Motor neuron (in vitro differentiated cells): ENCODE measurements at regions of chr5 and their contacts with region 1.

Region 1: GRCh38 chr5:170782438-170782837 is 1.1 kb upstream of the GABRP start:
- ATAC-seq: peak in 2 of 8 experiments; percentile 40 to 75
- H3K4me3 ChIP-seq: no peak overlapping the region
- H3K27ac ChIP-seq: no peak overlapping the region
- H3K4me1 ChIP-seq: no peaks in the 10 kb centered on the region

Region 2: DNA sequence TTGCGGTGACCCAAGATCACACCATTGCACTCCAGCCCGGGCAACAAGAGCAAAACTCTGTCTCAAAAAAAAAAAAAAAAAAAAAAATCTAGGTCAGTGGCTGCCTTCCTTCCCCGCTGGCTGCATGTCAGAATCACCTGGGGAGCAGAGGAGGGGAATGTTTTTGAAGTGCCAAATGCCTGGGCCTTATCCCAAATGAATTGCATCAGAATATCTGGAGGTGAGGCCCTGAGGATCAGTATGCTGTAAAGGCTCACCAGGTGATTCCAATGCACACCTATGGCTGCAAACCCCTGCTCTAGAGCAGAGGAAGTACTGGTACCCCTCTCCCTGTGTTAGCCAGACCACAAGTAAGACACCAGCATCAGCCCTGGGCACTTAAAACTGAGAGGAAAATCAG is 43.6 kb before region 1 on chr5:
- in situ Hi-C with region 1: loop called in 1 of 9 experiments (anchors 10 kb)
- ATAC-seq: no peak
- H3K4me3 ChIP-seq: no peak overlapping the region
- H3K27ac ChIP-seq: no peak overlapping the region
- H3K4me1 ChIP-seq: no peaks in the 10 kb centered on the region

Region 3: GRCh38 chr5:171521219-171521633 is 738.8 kb after region 1 on chr5:
- in situ Hi-C with region 1: no loop called
- ATAC-seq: peak; percentile 32 to 83 (median 70)
- H3K4me3 ChIP-seq: no peak overlapping the region
- H3K27ac ChIP-seq: no peak overlapping the region
- H3K4me1 ChIP-seq: peaks cover 12 to 18% of the 10 kb centered on the region in 2 donors